OCI-LY7 (cell line): ENCODE measurements at regions of chrX and their contacts with region 1.

Region 1: GRCh38 chrX:52261463-52262194 is 76.9 kb downstream of the MAGED4 start:
- DNase-seq: peak; percentile 85
- H3K4me3 ChIP-seq: peak overlapping the region; percentile 68
- H3K27ac ChIP-seq: peak overlapping the region; percentile 78
- H3K4me1 ChIP-seq: peaks cover 13% of the 10 kb centered on the region
- CTCF ChIP-seq: peak; percentile 87

Region 2: DNA sequence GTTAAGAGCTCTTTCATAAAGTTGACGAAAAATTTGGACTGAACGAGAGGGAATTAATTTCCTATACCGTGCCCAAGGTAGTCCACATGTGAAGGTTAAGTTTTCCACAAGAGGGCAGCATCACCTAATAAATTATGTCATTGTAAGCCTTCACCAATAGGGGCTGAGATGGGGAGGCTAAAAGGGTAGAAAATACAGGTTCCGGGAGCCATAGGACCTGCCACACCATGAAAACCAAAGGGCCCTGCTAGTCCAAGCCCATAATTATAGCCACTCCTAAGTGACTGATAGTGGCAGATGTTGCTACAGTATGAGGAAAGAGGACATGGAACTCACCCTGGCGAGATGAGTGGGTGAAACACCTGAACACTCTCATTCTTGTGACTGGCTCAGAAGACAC is 1569.8 kb before region 1 on chrX:
- CTCF ChIA-PET with region 1: no interaction called
- POLR2A ChIA-PET with region 1: no interaction called
- intact Hi-C with region 1: loop called (anchors 10 kb)
- DNase-seq: peak; percentile 55
- H3K4me3 ChIP-seq: no peak overlapping the region
- H3K27ac ChIP-seq: no peak overlapping the region
- H3K4me1 ChIP-seq: no peaks in the 10 kb centered on the region
- CTCF ChIP-seq: peak; percentile 73

Region 3: GRCh38 chrX:51614353-51615012 is 647.1 kb before region 1 on chrX:
- CTCF ChIA-PET with region 1: no interaction called
- POLR2A ChIA-PET with region 1: no interaction called
- intact Hi-C with region 1: loop called (anchors 2 kb)
- DNase-seq: peak; percentile 51
- H3K4me3 ChIP-seq: no peak overlapping the region
- H3K27ac ChIP-seq: no peak overlapping the region
- H3K4me1 ChIP-seq: no peaks in the 10 kb centered on the region
- CTCF ChIP-seq: peak; percentile 82

Region 4: DNA sequence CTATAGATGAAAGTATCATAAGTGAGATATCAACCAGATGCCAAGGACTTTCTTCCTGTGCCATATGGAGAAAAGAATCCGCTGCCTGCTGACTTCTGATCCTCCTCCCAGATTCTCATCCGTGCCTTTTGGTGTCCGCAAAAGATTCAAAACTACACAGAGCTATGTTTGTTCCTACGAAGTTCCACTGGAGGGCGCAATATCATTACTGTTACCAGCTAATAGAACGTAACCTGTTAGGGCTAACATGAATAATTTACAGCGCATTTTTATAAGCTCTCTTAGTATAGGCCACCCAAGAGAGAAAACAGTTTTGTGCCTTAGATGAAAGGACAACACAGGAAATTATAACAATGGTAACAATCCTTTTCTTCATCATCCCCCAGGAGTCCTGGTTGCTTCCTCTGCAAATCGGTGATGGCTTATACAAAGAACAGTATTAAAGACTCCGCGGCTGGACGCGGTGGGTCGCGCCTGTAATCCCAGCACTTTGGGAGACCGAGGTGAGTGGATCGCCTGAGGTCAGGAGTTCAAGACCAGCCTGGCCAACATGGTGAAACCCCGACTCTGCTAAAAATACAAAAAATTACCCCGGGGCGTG is 620.1 kb before region 1 on chrX:
- CTCF ChIA-PET with region 1: interaction called, 3 read pairs
- POLR2A ChIA-PET with region 1: no interaction called
- intact Hi-C with region 1: loop called (anchors 5 kb)
- DNase-seq: peak; percentile 47
- H3K4me3 ChIP-seq: no peak overlapping the region
- H3K27ac ChIP-seq: no peak overlapping the region
- H3K4me1 ChIP-seq: no peaks in the 10 kb centered on the region
- CTCF ChIP-seq: peak; percentile 78

Region 5: DNA sequence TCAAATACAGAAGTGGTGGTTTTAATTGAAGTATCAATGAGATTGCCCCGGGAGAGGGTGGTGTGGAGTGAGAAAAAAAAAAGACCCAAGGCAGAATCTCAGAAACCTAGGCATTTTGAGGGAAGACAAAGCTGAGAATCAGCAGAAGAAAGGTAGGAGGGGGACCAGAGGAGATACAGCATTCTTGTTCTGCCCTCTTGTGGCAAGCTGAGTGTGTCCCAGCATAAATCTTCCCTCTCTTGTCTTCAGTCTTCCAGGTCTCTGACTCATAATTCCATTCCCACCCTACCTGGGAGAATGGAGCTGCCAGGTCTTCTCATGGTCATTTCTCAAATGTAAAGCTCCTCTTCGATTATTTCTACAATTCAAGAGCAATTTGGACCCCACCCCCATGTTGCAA is 400.9 kb before region 1 on chrX:
- CTCF ChIA-PET with region 1: no interaction called
- POLR2A ChIA-PET with region 1: no interaction called
- intact Hi-C with region 1: loop called (anchors 5 kb)
- DNase-seq: peak; percentile 33
- H3K4me3 ChIP-seq: no peak overlapping the region
- H3K27ac ChIP-seq: no peak overlapping the region
- H3K4me1 ChIP-seq: no peaks in the 10 kb centered on the region
- CTCF ChIP-seq: peak; percentile 71

Region 6: DNA sequence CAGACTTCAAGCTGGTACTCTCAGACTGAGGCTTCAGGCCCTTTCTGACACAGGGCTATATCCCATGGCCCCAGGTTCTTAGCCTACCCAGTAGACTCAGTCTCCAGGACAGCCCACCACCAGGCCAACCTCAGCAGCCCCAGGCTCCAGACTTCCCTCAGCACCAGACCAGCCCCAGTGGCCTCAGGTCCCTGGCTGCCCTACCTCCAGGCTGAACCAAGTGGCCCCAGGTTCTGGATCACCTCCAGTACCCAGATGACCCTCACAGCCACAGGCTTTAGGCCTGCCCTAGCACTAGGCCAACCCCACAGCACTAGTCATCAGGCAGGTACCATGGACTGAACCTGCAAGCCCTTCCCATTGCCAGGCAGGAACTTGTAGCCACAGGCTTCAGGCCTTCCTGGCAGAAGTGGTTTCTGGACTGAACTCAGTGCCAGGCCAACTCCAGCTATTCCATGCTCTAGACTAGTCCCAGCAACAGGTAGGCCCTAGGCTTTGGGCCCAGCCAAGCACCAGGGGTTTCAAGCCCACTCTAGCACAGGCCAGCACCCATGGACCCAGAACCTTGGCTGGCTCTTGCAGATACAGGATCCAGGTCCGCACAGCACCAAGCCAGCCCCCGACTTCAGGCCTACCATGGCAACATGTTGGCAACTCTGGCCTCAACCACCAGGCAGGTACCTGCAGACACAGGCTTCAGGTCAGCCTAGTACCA is 122.6 kb before region 1 on chrX:
- CTCF ChIA-PET with region 1: no interaction called
- POLR2A ChIA-PET with region 1: no interaction called
- intact Hi-C with region 1: no loop called
- DNase-seq: no peak
- H3K4me3 ChIP-seq: no peak overlapping the region
- H3K27ac ChIP-seq: no peak overlapping the region
- H3K4me1 ChIP-seq: no peaks in the 10 kb centered on the region
- CTCF ChIP-seq: no peak

Region 7: DNA sequence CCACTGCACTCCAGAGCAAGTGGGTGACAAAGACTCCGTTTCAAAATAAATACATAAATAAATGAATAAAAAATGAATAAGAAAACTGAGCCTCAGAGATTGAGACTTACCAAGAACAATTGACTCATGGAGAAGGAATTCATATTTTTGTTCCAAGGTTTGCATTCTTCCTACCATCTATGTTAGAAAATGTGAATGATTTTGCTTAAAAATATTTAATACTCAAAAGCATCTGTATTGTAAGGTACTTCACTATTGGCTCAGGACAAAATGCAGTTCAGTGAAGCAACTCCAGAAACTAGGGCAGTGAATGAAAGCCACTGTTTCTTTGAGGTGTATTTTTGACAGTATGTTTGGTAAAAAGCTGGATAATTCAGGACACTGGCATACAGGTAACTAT is 161.3 kb after region 1 on chrX:
- CTCF ChIA-PET with region 1: no interaction called
- POLR2A ChIA-PET with region 1: no interaction called
- intact Hi-C with region 1: no loop called
- DNase-seq: no peak
- H3K4me3 ChIP-seq: no peak overlapping the region
- H3K27ac ChIP-seq: no peak overlapping the region
- H3K4me1 ChIP-seq: no peaks in the 10 kb centered on the region
- CTCF ChIP-seq: no peak